Heart left ventricle (tissue), 16 donors: ENCODE measurements at regions of chr15 and their contacts with region 1.

Region 1: DNA sequence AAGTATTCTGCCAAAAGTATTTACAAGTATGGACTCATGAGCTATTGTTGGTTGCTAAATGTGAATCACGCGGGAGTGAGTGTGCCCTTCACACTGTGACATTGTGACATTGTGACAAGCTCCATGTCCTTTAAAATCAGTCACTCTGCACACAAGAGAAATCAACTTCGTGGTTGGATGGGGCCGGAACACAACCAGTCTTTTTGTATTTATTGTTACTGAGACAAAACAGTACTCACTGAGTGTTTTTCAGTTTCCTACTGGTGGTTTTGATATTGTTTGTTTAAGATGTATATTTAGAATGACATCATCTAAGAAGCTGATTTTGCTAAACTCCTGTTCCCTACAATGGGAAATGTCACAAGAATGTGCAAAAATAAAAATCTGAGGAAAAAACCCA is 30.3 kb downstream of the SYNM start:
- DNase-seq: no peak
- ATAC-seq: peak in 2 of 4 donors; percentile 56 to 66
- H3K4me3 ChIP-seq: no peak overlapping the region
- H3K27ac ChIP-seq: peak overlapping the region in 11 of 12 donors; percentile 61 to 98 (median 68)
- H3K4me1 ChIP-seq: peaks cover 0 to 58% (median 17%) of the 10 kb centered on the region in 12 donors
- H3K27me3 ChIP-seq: no peaks in the 10 kb centered on the region
- CTCF ChIP-seq: no peak
- POLR2A ChIP-seq: no peak

Region 2: DNA sequence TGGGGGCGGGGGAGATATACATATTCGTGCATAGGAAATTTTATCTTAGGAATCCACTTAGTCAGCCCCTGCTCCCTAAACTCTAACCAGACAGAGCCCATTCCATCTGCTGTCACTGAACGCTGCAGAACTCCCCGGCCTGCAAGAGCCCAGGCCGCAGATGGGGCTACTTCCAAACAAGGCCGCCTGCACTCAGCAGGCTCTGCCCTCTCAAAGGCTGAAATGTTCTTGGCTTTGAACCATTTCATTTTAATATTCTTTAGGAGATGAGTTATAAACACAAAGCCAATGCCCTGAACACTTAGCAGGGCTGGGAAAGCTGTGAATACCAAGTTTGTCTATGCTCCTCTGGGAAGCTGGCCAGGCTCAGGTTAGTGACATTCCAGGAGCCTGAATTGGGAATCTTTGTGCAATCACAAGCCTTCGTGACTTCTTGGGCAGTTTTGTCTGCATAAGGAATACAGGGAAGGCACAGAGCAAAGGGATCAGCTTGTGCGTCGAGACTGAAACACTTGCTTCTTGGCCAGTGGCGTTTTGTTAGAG is 34.6 kb after region 1 on chr15:
- intact Hi-C with region 1: loop called in 1 of 10 experiments (anchors 5 kb)
- DNase-seq: peak in 2 of 5 donors; percentile 29 to 53
- ATAC-seq: peak; percentile 40 to 57 (median 52)
- H3K4me3 ChIP-seq: no peak overlapping the region
- H3K27ac ChIP-seq: peak overlapping the region; percentile 62 to 94 (median 83)
- H3K4me1 ChIP-seq: peaks cover 0 to 65% (median 20%) of the 10 kb centered on the region in 12 donors
- H3K27me3 ChIP-seq: no peaks in the 10 kb centered on the region
- CTCF ChIP-seq: no peak
- POLR2A ChIP-seq: no peak

Region 3: GRCh38 chr15:99264125-99264524 is 128.9 kb after region 1 on chr15:
- intact Hi-C with region 1: no loop called
- DNase-seq: no peak
- ATAC-seq: no peak
- H3K4me3 ChIP-seq: no peak overlapping the region
- H3K27ac ChIP-seq: no peak overlapping the region
- H3K4me1 ChIP-seq: no peaks in the 10 kb centered on the region
- H3K27me3 ChIP-seq: no peaks in the 10 kb centered on the region
- CTCF ChIP-seq: no peak
- POLR2A ChIP-seq: no peak